ENCODE measurements at regions of chr17 and their contacts with region 1.

Region 1: DNA sequence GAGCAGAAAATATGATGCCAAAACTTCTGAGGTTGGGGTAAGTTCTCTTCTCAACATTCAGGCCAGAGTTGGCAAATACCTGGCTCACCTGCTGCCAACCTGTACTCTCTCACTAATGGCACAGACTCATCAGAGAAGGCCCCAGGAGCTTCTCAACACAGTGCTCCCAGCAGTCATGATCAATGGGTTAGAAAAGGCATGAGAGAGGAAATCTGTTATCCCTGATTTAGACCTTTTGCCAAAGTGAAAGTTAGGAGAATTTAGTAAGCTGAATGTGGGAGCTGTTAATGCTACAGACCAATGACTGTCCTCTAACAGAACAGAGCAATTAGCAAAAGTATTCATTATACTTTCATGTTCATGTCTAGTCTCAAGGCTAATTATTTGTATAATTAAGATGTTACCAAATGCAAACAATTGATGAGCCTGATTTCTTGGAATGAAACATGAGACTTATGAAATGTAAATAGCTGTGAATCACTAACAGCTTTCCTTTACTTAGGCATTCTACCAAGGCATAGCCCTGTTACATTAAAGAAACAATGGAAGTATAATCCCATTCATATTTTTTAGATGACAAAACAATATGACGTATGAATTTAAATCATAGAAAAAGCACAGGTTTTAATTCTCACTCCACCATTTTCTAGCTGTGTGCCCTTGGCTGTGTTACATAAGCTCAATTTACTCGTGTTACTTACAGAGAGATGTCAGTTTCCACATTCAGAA is 68.7 kb upstream of the MARCHF10 start:
- DNase-seq: peak; percentile 61
- H3K4me3 Mint-ChIP-seq: no peak overlapping the region
- H3K27ac Mint-ChIP-seq: peak overlapping the region; percentile 54
- H3K4me1 Mint-ChIP-seq: peaks cover 14% of the 10 kb centered on the region
- H3K27me3 Mint-ChIP-seq: no peaks in the 10 kb centered on the region
- CTCF ChIP-seq: no peak

Region 2: DNA sequence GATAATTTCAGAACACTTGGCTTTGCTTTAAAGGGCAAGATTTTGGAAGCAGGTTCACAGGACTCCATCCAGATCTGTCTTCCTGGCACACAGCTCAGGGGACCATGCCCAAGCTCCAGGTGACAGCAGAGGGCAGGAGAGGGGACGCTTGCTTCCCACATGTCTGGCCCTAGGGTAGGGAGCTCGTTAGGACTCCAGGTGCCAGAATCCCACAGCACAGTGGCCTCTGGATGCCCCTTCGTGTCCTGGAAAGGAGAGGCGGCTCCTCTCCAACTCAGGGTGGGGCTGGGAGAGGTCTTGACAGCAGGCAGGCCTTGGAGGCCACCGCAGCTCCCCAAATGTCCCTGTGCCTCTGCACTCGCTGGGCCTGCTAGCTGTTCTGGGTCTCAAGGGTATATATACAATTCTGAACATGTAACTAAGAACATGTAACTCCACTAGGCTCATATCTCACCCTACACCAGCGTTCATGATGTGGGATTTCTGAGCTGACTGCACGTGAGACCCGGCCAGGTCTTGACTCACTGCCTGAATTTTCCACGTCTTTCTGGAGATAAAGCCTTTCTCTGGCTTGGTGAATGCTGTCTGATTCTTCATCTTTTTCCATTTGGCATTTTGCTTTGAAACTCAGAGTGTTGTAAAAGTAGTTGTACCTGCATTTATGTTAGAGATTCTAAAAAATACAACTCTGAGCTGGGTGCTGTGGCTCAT is 121.5 kb before region 1 on chr17:
- CTCF ChIA-PET with region 1: no interaction called
- POLR2A ChIA-PET with region 1: no interaction called
- intact Hi-C with region 1: no loop called
- DNase-seq: no peak
- H3K4me3 Mint-ChIP-seq: no peak overlapping the region
- H3K27ac Mint-ChIP-seq: no peak overlapping the region
- H3K4me1 Mint-ChIP-seq: peaks cover 5% of the 10 kb centered on the region
- H3K27me3 Mint-ChIP-seq: no peaks in the 10 kb centered on the region
- CTCF ChIP-seq: no peak

Region 3: DNA sequence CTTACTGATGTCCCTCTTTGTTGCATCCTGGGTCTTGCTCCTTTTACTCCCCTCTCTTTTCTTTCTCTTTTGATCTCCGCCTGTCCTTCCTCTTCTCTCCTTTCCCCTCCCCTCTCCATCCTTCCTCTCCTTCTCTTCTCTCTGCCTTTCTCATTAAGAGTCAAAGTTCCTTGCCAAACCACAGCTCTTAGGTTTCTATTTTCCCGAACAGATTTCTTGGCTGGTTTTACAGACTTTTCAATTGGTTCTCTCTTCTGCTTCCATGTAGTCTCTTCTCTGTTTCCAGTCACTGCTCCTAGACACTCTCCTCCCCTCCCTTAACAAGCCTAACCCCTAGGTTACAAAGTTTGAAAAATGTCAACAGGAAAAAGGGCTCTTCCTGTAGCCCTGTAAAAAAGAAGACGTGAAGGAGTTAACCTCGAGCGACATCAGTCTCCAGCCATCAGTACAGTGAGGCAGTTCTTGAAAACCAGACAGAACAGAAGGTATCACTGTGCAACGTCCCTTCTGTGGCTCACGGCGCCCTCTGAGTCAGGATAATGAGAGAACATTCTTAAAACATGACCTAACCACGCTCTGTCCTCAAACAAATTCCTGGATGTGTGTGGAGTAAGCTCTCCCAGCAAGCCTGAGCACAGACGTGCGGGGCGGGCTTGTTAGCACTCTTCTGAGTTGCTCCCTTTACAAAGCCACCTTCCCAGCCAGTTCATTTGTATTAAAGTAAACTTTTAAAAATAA is 57.2 kb before region 1 on chr17:
- CTCF ChIA-PET with region 1: interaction called, 4 read pairs
- POLR2A ChIA-PET with region 1: interaction called, 15 read pairs
- intact Hi-C with region 1: no loop called
- DNase-seq: peak; percentile 95
- H3K4me3 Mint-ChIP-seq: peak overlapping the region; percentile 50
- H3K27ac Mint-ChIP-seq: peak overlapping the region; percentile 91
- H3K4me1 Mint-ChIP-seq: peaks cover 34% of the 10 kb centered on the region
- H3K27me3 Mint-ChIP-seq: no peaks in the 10 kb centered on the region
- CTCF ChIP-seq: no peak

Region 4: GRCh38 chr17:62892870-62893338 is 16.1 kb after region 1 on chr17:
- CTCF ChIA-PET with region 1: interaction called, 4 read pairs
- POLR2A ChIA-PET with region 1: interaction called, 31 read pairs
- intact Hi-C with region 1: no loop called
- DNase-seq: peak; percentile 96
- H3K4me3 Mint-ChIP-seq: peak overlapping the region; percentile 44
- H3K27ac Mint-ChIP-seq: peak overlapping the region; percentile 81
- H3K4me1 Mint-ChIP-seq: peaks cover 17% of the 10 kb centered on the region
- H3K27me3 Mint-ChIP-seq: no peaks in the 10 kb centered on the region
- CTCF ChIP-seq: no peak